ENCODE measurements at regions of chr2 and their contacts with region 1.

Region 1: GRCh38 chr2:199739413-199740110 is 111.4 kb downstream of the FTCDNL1 start:
- DNase-seq: peak; percentile 47 to 59 (median 58)
- ATAC-seq: peak; percentile 81
- H3K4me3 ChIP-seq: no peak overlapping the region
- H3K27ac ChIP-seq: no peak overlapping the region
- H3K4me1 ChIP-seq: no peaks in the 10 kb centered on the region
- H3K27me3 ChIP-seq: peaks cover 5 to 8% of the 10 kb centered on the region in 2 experiments; a peak in 3 of 5 replicates
- CTCF ChIP-seq: peak; percentile 56 to 77 (median 73)
- EP300 ChIP-seq: no peak
- POLR2A ChIP-seq: no peak
- RAD21 ChIP-seq: peak; percentile 67 to 71

Region 2: DNA sequence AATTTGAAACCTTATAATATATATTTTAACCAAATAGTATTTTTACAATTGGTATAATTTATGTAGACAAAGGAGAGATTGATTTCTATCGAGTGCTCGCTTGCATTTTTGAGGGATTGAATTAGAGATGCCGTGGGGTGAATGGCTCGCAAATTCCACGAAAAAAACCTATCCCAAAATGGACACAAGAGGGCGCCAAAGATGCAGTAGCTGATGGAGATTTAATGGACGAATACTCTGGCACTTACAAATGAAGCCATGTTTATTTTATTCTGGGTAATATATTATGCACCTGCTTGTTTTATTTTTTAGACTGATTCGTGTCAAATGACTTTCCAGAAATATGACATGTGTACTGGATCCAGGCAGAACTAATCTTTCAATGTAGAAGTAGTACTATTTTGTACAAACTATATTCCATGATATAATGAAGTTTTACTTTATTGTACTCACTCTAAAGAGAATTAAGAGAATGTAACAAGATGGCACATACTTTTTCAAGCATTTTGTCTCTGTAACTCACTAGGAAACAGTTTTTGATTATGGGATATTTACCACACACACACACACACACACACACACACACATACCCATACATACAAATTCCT is 1429.8 kb before region 1 on chr2:
- CTCF ChIA-PET with region 1: interaction called, 7 read pairs
- POLR2A ChIA-PET with region 1: no interaction called
- in situ Hi-C with region 1: loop called (anchors 25 kb)
- intact Hi-C with region 1: loop called (anchors 2 kb)
- DNase-seq: peak; percentile 54 to 61 (median 57)
- ATAC-seq: peak; percentile 63; the same call in 1 of the 3 replicates
- H3K4me3 ChIP-seq: no peak overlapping the region
- H3K27ac ChIP-seq: no peak overlapping the region
- H3K4me1 ChIP-seq: no peaks in the 10 kb centered on the region
- H3K27me3 ChIP-seq: peaks cover 0 to 8% of the 10 kb centered on the region in 2 experiments; a peak in 1 of 5 replicates
- CTCF ChIP-seq: peak; percentile 57 to 77 (median 59)
- EP300 ChIP-seq: no peak
- POLR2A ChIP-seq: no peak
- RAD21 ChIP-seq: peak; percentile 30 to 53; a peak in 3 of 4 replicates

Region 3: DNA sequence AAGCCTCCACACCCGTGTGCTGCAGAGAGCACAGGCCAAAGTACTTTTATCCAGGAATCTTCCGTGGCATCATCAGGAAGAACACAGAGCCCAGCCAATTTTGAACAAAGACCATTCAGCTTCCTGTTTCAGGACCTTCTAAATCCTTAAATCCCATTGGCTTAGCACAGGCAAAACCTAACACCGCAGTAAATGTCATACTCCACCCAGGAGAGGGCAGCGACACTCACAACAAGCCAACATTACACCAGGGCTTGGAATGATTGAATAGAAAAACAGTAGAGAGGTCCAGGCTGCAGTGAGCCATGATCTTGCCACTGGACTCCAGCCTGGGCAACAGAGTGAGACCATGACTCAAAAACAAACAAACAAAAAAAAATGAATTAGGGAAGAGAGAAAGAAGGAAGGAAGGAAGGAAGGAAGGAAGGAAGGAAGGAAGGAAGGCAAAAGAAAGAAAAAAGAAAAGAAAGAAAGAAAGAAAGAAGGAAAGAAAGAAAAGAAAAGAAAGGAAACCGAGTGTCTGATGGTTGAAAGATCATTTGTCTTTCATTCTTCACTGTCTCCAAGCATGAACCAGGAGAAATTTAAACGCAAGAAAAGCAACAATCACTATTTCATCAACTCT is 137.2 kb before region 1 on chr2:
- CTCF ChIA-PET with region 1: no interaction called
- POLR2A ChIA-PET with region 1: no interaction called
- in situ Hi-C with region 1: no loop called
- intact Hi-C with region 1: loop called (anchors 10 kb)
- DNase-seq: peak in 2 of 4 experiments; percentile 12
- ATAC-seq: peak; percentile 79
- H3K4me3 ChIP-seq: no peak overlapping the region
- H3K27ac ChIP-seq: no peak overlapping the region
- H3K4me1 ChIP-seq: peaks cover 0 to 6% of the 10 kb centered on the region in 2 experiments; a peak in 2 of 5 replicates
- H3K27me3 ChIP-seq: peaks cover 0 to 11% of the 10 kb centered on the region in 2 experiments; a peak in 3 of 5 replicates
- CTCF ChIP-seq: peak in 1 of 3 experiments; percentile 16; a peak in 1 of 6 replicates
- EP300 ChIP-seq: no peak
- POLR2A ChIP-seq: no peak
- RAD21 ChIP-seq: no peak

Region 4: DNA sequence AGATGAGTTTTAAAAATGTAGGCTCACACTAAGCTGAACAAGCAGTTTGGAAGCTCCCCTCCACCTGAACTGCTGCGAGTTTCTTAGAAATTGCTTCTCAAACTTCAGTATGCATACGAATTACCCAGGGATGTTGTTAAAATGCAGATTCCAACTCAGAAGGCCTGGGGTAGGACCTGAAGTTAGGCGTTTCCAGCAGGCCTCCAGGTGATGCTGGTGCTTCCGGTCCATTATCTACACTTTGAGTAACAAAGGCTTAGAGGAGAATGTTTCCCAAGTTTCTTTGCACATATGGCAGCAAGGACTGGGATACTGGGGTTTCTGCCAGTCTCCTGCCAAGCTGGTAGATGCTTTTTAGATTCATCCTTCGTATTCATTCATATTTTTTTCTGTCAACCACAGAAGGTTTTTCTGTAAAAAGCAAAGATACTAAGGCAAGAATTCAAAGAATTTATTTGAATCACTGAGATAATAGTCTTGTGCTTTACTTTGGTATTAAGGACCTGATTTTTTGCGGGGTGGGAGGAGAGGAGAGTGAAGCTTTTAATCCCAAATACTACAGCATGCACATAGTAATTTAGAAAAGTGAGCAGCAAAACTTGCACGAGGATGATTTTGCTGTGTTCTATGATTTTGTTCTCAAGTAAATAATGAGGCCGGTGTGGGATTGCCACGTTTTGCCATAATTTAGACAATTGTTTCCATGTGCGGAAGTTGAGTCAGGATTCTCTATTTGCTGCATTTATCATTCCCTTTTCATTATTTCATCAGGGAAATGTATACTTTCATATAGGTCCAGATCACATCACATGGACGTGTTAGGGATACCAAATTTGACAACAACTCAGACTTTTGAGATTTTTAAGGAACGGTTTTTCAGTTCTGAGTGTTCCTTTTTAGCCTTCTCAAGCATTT is 429.3 kb after region 1 on chr2:
- CTCF ChIA-PET with region 1: no interaction called
- POLR2A ChIA-PET with region 1: no interaction called
- in situ Hi-C with region 1: no loop called
- intact Hi-C with region 1: no loop called
- DNase-seq: no peak
- ATAC-seq: no peak
- H3K4me3 ChIP-seq: no peak overlapping the region
- H3K27ac ChIP-seq: no peak overlapping the region
- H3K4me1 ChIP-seq: peaks cover 0 to 4% of the 10 kb centered on the region in 2 experiments; a peak in 1 of 5 replicates
- H3K27me3 ChIP-seq: no peaks in the 10 kb centered on the region
- CTCF ChIP-seq: no peak
- EP300 ChIP-seq: no peak
- POLR2A ChIP-seq: no peak
- RAD21 ChIP-seq: no peak